ENCODE measurements at regions of chr17 and their contacts with region 1.

Region 1: GRCh38 chr17:19306160-19307111 is 56.1 kb downstream of the B9D1 start:
- DNase-seq: peak; percentile 98
- H3K4me3 ChIP-seq: peak overlapping the region; percentile 49
- H3K27ac ChIP-seq: peak overlapping the region; percentile 84
- H3K4me1 ChIP-seq: peaks cover 92% of the 10 kb centered on the region
- CTCF ChIP-seq: no peak

Region 2: DNA sequence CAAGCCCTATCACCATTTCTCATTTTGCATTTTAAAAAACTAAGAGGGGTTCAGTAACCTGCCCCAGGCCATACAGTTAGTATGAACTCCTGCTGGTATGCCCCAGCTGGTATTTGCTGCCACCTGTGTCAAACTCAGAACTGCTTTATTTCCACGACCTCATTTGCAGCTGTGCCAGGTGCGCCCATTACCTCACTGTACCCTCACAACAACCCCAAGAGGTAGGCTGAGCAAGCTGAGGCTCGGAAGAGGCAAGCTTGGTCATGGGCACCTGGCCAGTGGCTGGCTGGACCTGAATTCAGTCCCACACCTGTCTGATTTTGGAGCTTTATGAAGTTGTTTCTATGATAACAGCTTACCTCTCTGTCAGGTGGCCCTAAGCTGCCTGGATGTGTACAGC is 61.7 kb before region 1 on chr17:
- CTCF ChIA-PET with region 1: no interaction called
- POLR2A ChIA-PET with region 1: interaction called, 6 read pairs
- intact Hi-C with region 1: loop called (anchors 2 kb)
- DNase-seq: peak; percentile 84
- H3K4me3 ChIP-seq: no peak overlapping the region
- H3K27ac ChIP-seq: peak overlapping the region; percentile 49
- H3K4me1 ChIP-seq: peaks cover 45% of the 10 kb centered on the region
- CTCF ChIP-seq: no peak

Region 3: GRCh38 chr17:19270689-19271611 is 35.5 kb before region 1 on chr17:
- CTCF ChIA-PET with region 1: no interaction called
- POLR2A ChIA-PET with region 1: interaction called, 4 read pairs
- intact Hi-C with region 1: loop called (anchors 2 kb)
- DNase-seq: peak; percentile 73
- H3K4me3 ChIP-seq: peak overlapping the region; percentile 10
- H3K27ac ChIP-seq: peak overlapping the region; percentile 27
- H3K4me1 ChIP-seq: peaks cover 49% of the 10 kb centered on the region
- CTCF ChIP-seq: no peak

Measured in OCI-LY7 (cell line).